ENCODE measurements at regions of chrX and their contacts with region 1.

Region 1: GRCh38 chrX:104113222-104113965 is 1.1 kb downstream of the ZCCHC18 start:
- DNase-seq: peak in 8 of 9 experiments; percentile 31 to 78 (median 58)
- ATAC-seq: peak; percentile 45
- H3K4me3 ChIP-seq: peak overlapping the region; percentile 68 to 71
- H3K4me3 Mint-ChIP-seq: peak overlapping the region; percentile 89
- H3K27ac ChIP-seq: peak overlapping the region; percentile 78 to 79
- H3K27ac Mint-ChIP-seq: peak overlapping the region; percentile 95
- H3K4me1 ChIP-seq: peaks cover 40% of the 10 kb centered on the region
- H3K4me1 Mint-ChIP-seq: peaks cover 53% of the 10 kb centered on the region
- H3K27me3 ChIP-seq: no peaks in the 10 kb centered on the region
- H3K27me3 Mint-ChIP-seq: no peaks in the 10 kb centered on the region
- CTCF ChIP-seq: peak; percentile 41

Region 2: DNA sequence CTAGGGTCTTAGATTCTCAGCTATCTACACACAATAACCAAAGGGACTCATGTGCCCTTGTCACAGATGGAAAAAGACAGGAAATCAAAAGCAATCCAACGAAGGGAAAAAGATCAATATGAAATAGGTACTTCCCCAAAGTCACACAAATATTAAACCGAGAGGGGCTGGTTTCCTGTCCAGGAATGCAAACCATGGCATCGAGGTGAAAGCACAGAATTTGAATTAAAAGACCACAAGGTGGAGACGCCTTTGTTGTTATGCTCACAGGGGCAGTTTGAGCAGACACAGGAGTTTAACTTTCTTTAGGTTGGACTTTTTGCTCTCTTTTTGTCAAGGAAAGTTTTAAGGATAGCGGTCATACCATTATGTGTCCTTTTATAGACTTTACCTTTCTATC is 114.2 kb before region 1 on chrX:
- CTCF ChIA-PET with region 1: no interaction called
- POLR2A ChIA-PET with region 1: no interaction called
- intact Hi-C with region 1: no loop called
- DNase-seq: no peak
- ATAC-seq: no peak
- H3K4me3 ChIP-seq: no peak overlapping the region
- H3K4me3 Mint-ChIP-seq: no peak overlapping the region
- H3K27ac ChIP-seq: no peak overlapping the region
- H3K27ac Mint-ChIP-seq: no peak overlapping the region
- H3K4me1 ChIP-seq: no peaks in the 10 kb centered on the region
- H3K4me1 Mint-ChIP-seq: no peaks in the 10 kb centered on the region
- H3K27me3 ChIP-seq: no peaks in the 10 kb centered on the region
- H3K27me3 Mint-ChIP-seq: peaks cover 2% of the 10 kb centered on the region
- CTCF ChIP-seq: no peak

Region 3: GRCh38 chrX:104098151-104098808 is 15.1 kb before region 1 on chrX:
- CTCF ChIA-PET with region 1: interaction called, 34 read pairs
- POLR2A ChIA-PET with region 1: interaction called, 5 read pairs
- intact Hi-C with region 1: loop called (anchors 1 kb)
- DNase-seq: peak in 8 of 9 experiments; percentile 21 to 85 (median 58)
- ATAC-seq: peak; percentile 77
- H3K4me3 ChIP-seq: no peak overlapping the region
- H3K4me3 Mint-ChIP-seq: no peak overlapping the region
- H3K27ac ChIP-seq: no peak overlapping the region
- H3K27ac Mint-ChIP-seq: no peak overlapping the region
- H3K4me1 ChIP-seq: no peaks in the 10 kb centered on the region
- H3K4me1 Mint-ChIP-seq: peaks cover 4% of the 10 kb centered on the region
- H3K27me3 ChIP-seq: no peaks in the 10 kb centered on the region
- H3K27me3 Mint-ChIP-seq: no peaks in the 10 kb centered on the region
- CTCF ChIP-seq: peak; percentile 57

Region 4: DNA sequence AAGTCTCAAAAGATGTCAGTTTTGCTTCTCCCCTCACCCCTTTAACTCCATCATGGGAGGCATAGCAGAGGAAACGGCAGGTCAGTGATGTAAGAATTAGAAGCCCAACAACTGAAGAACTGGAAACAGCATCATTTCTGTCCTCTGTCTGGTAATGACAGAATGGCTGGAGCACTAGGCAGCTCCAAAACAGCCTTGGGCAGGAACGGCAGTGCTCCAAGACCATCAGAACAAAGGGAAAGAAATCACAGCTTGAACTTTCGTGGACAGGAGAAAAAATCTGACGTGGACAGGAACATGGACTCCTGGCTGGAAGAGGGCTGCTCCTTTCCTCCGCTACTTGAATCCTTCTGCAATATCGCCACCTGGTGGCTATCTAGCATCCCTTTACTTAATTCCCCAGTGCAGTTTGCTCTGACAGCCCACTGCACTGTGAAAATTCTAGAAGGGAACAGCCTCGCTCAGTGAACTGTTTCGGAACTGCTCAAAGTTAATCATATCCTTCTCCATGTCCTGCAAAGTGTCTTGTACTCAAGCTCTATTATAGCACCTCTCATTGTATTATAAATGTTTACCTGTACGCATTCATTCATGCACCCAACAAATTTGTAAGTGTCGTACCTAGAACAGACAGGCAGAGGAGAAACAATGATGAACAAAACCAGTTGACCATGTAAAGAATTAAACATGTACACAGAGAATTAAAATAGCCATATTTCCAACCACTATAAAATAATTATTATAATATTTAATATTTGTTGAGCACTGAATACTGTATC is 23.0 kb after region 1 on chrX:
- CTCF ChIA-PET with region 1: interaction called, 20 read pairs
- POLR2A ChIA-PET with region 1: interaction called, 3 read pairs
- intact Hi-C with region 1: loop called in 1 of 2 experiments (anchors 1 kb)
- DNase-seq: peak in 8 of 9 experiments; percentile 32 to 82 (median 62)
- ATAC-seq: peak; percentile 70
- H3K4me3 ChIP-seq: no peak overlapping the region
- H3K4me3 Mint-ChIP-seq: peak overlapping the region; percentile 22
- H3K27ac ChIP-seq: no peak overlapping the region
- H3K27ac Mint-ChIP-seq: no peak overlapping the region
- H3K4me1 ChIP-seq: peaks cover 13% of the 10 kb centered on the region
- H3K4me1 Mint-ChIP-seq: peaks cover 28% of the 10 kb centered on the region
- H3K27me3 ChIP-seq: no peaks in the 10 kb centered on the region
- H3K27me3 Mint-ChIP-seq: no peaks in the 10 kb centered on the region
- CTCF ChIP-seq: peak; percentile 61

Region 5: GRCh38 chrX:104156630-104157529 is 43.5 kb after region 1 on chrX and contains the start of gene SLC25A53:
- CTCF ChIA-PET with region 1: no interaction called
- POLR2A ChIA-PET with region 1: interaction called, 11 read pairs
- intact Hi-C with region 1: loop called in 1 of 2 experiments (anchors 5 kb)
- DNase-seq: peak; percentile 55 to 91 (median 71)
- ATAC-seq: peak; percentile 81
- H3K4me3 ChIP-seq: peak within 1 kb of the TSS; percentile 62 to 75
- H3K4me3 Mint-ChIP-seq: peak within 1 kb of the TSS; percentile 97
- H3K27ac ChIP-seq: peak within 1 kb of the TSS; percentile 88 to 92
- H3K27ac Mint-ChIP-seq: peak within 1 kb of the TSS; percentile 100
- H3K4me1 ChIP-seq: peaks cover 10% of the 10 kb centered on the region
- H3K4me1 Mint-ChIP-seq: peaks cover 27% of the 10 kb centered on the region
- H3K27me3 ChIP-seq: no peaks in the 10 kb centered on the region
- H3K27me3 Mint-ChIP-seq: no peaks in the 10 kb centered on the region
- CTCF ChIP-seq: no peak
- total RNA-seq, gene SLC25A53: 7.9 to 8.9 TPM